CD8-positive, alpha-beta T cell (primary cell): ENCODE measurements at regions of chr1 and their contacts with region 1.

Region 1: GRCh38 chr1:235011599-235012435 is 116.8 kb downstream of the TOMM20 start:
- DNase-seq: peak; percentile 81 to 100 (median 90)
- ATAC-seq: peak; percentile 91
- H3K4me3 ChIP-seq: peak overlapping the region; percentile 11 to 47
- H3K4me3 Mint-ChIP-seq: peak overlapping the region; percentile 73
- H3K27ac ChIP-seq: peak overlapping the region; percentile 64 to 87
- H3K27ac Mint-ChIP-seq: peak overlapping the region; percentile 94
- H3K4me1 ChIP-seq: peaks cover 30% of the 10 kb centered on the region
- H3K4me1 Mint-ChIP-seq: peaks cover 54% of the 10 kb centered on the region
- H3K27me3 ChIP-seq: no peaks in the 10 kb centered on the region
- H3K27me3 Mint-ChIP-seq: no peaks in the 10 kb centered on the region
- CTCF ChIP-seq: no peak

Region 2: DNA sequence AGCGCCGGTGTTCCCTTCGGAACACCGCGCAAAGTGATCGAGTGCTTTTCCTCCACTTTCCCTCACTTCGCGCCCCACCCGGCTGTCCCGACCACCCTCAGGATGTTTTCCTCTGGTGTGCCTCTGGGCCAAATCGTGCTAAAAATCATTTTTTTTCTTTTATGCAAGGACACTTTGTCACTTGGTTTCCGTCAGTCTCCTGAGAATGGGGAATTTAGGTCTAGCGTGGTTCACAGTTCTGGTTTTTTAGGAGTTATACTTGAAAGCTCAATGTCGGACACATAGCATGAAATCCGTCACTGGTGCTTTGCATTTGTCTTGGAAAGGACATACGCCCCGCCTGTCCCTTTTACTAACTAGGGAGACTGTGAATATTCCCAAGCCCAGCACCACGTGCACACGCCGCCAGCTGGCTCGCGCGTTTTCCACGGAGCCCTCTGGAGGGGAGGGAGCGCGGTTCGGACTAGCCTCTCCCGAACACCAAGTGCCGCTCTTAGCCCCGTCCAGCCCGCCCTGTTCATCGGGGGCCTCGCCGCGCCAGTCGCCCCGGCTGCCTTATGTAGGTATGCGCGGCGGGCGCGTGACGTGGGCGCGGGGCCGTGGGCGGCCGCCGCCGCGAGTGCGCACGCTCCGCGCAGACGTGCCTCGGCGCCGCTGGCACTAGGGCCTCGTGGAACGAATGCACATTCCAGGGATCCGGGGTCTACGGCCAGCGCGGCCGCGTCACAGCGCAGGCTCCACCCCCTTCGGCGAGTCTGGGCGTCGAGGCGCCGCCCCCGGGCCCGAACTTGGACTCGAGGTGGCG is 401.3 kb before region 1 on chr1:
- CTCF ChIA-PET with region 1: no interaction called
- POLR2A ChIA-PET with region 1: interaction called, 5 read pairs
- intact Hi-C with region 1: loop called (anchors 1 to 2 kb)
- DNase-seq: peak; percentile 78 to 98 (median 89)
- ATAC-seq: peak; percentile 42
- H3K4me3 ChIP-seq: peak overlapping the region; percentile 78 to 86
- H3K4me3 Mint-ChIP-seq: peak overlapping the region; percentile 92
- H3K27ac ChIP-seq: peak overlapping the region; percentile 97 to 99
- H3K27ac Mint-ChIP-seq: peak overlapping the region; percentile 98
- H3K4me1 ChIP-seq: peaks cover 46% of the 10 kb centered on the region
- H3K4me1 Mint-ChIP-seq: peaks cover 49% of the 10 kb centered on the region
- H3K27me3 ChIP-seq: no peaks in the 10 kb centered on the region
- H3K27me3 Mint-ChIP-seq: no peaks in the 10 kb centered on the region
- CTCF ChIP-seq: no peak

Region 3: DNA sequence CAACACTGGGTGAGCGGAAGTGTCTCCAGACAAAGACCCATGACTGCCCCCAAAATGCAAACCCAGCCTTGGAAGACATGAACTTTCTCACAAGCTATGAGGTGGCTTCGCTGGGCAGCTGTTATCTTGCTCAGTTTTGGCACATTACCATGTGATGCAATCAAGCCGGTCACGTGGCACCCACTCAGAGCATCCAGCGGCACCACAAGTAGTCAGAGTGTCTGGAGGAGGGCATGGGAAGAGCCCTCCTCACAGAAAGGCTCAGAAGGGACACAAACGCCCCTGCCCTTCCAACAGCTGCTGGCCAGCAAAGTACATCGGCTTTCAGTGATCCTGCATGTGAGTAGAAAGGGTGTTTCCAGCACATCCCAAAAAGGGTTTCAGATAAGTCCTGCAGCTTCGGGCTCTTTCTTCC is 256.4 kb before region 1 on chr1:
- CTCF ChIA-PET with region 1: no interaction called
- POLR2A ChIA-PET with region 1: no interaction called
- intact Hi-C with region 1: loop called (anchors 1 to 5 kb)
- DNase-seq: no peak
- ATAC-seq: no peak
- H3K4me3 ChIP-seq: no peak overlapping the region
- H3K4me3 Mint-ChIP-seq: no peak overlapping the region
- H3K27ac ChIP-seq: no peak overlapping the region
- H3K27ac Mint-ChIP-seq: no peak overlapping the region
- H3K4me1 ChIP-seq: peaks cover 37% of the 10 kb centered on the region
- H3K4me1 Mint-ChIP-seq: peaks cover 41% of the 10 kb centered on the region
- H3K27me3 ChIP-seq: no peaks in the 10 kb centered on the region
- H3K27me3 Mint-ChIP-seq: no peaks in the 10 kb centered on the region
- CTCF ChIP-seq: no peak

Region 4: DNA sequence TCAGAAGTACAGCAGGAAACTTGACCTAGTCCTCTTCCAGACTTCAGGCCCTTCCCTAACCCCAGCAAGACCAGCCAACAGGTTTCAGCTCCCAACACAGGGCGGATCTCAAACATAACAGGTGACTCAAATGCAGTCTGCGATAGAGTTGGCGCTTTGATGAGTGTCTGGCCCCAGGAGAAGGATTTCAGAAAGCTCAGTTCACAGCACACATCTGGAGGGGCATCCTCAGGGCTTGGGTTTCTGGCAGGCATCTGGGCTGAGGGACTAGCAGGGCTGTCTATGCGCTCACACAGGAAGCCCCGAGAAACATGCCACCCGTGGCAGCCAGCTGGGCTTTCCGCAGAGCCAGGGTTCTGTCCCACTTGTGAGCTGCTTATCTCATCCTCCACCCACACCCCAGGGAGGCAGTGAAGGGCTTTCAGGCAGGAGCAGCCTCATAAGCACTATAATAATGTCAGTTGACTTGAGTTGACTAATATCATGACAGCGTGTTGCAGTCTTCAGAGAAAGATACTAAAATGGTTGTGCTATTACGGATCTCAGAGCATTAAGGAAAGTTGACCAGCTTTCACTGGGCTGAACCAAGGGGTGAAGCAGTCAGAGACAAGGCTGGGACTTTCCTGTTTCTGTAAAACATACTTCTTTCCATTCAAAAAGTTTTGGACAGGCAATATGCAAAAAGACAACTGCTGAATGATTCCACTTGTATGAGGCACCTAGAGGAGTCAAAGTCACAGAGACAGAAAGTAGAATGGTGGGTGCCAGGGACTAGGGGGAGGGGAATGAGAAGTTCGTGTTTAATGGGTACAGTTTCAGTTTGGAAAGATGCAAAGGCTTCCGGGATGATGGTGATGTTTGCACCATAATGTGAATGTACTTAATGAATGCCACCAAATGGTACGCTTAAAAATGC is 168.8 kb before region 1 on chr1:
- CTCF ChIA-PET with region 1: no interaction called
- POLR2A ChIA-PET with region 1: no interaction called
- intact Hi-C with region 1: loop called in 1 of 2 experiments (anchors 2 kb)
- DNase-seq: peak; percentile 10 to 76 (median 51)
- ATAC-seq: peak; percentile 48
- H3K4me3 ChIP-seq: no peak overlapping the region
- H3K4me3 Mint-ChIP-seq: peak overlapping the region; percentile 49
- H3K27ac ChIP-seq: no peak overlapping the region
- H3K27ac Mint-ChIP-seq: peak overlapping the region; percentile 75
- H3K4me1 ChIP-seq: peaks cover 53% of the 10 kb centered on the region
- H3K4me1 Mint-ChIP-seq: peaks cover 57% of the 10 kb centered on the region
- H3K27me3 ChIP-seq: no peaks in the 10 kb centered on the region
- H3K27me3 Mint-ChIP-seq: no peaks in the 10 kb centered on the region
- CTCF ChIP-seq: no peak

Region 5: GRCh38 chr1:234963180-234963903 is 48.5 kb before region 1 on chr1:
- CTCF ChIA-PET with region 1: no interaction called
- POLR2A ChIA-PET with region 1: no interaction called
- intact Hi-C with region 1: loop called (anchors 1 kb)
- DNase-seq: peak; percentile 58 to 97 (median 86)
- ATAC-seq: peak; percentile 85
- H3K4me3 ChIP-seq: peak overlapping the region in 1 of 2 experiments; percentile 16
- H3K4me3 Mint-ChIP-seq: peak overlapping the region; percentile 64
- H3K27ac ChIP-seq: peak overlapping the region; percentile 31 to 81
- H3K27ac Mint-ChIP-seq: peak overlapping the region; percentile 90
- H3K4me1 ChIP-seq: peaks cover 58% of the 10 kb centered on the region
- H3K4me1 Mint-ChIP-seq: peaks cover 62% of the 10 kb centered on the region
- H3K27me3 ChIP-seq: no peaks in the 10 kb centered on the region
- H3K27me3 Mint-ChIP-seq: no peaks in the 10 kb centered on the region
- CTCF ChIP-seq: no peak

Region 6: DNA sequence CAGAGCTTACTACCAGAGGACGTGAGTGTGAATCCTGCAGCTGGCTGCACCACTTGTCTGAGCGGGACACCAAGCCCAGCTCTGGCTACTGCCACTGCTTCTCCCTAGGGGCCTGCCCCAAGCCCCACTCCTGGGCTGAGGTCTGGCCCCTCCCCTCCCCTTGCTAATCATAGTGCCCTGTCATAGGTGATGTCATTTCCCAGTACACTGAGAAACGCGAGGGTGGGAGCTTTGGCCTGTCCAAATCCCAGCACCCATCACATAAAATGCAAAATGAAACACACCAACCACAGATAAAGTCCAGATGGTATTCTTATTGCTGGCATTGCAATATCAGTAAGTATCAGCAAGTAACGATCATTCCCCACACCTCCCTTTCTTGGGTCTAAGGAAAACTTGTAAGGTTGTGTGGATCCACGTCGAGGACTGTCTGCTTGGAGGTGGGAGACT is 39.1 kb after region 1 on chr1:
- CTCF ChIA-PET with region 1: no interaction called
- POLR2A ChIA-PET with region 1: no interaction called
- intact Hi-C with region 1: no loop called
- DNase-seq: no peak
- ATAC-seq: no peak
- H3K4me3 ChIP-seq: no peak overlapping the region
- H3K4me3 Mint-ChIP-seq: no peak overlapping the region
- H3K27ac ChIP-seq: no peak overlapping the region
- H3K27ac Mint-ChIP-seq: no peak overlapping the region
- H3K4me1 ChIP-seq: no peaks in the 10 kb centered on the region
- H3K4me1 Mint-ChIP-seq: no peaks in the 10 kb centered on the region
- H3K27me3 ChIP-seq: no peaks in the 10 kb centered on the region
- H3K27me3 Mint-ChIP-seq: no peaks in the 10 kb centered on the region
- CTCF ChIP-seq: no peak

Region 7: GRCh38 chr1:235075188-235075926 is 63.5 kb after region 1 on chr1:
- CTCF ChIA-PET with region 1: no interaction called
- POLR2A ChIA-PET with region 1: no interaction called
- intact Hi-C with region 1: loop called in 1 of 2 experiments (anchors 5 kb)
- DNase-seq: peak in 8 of 9 experiments; percentile 22 to 61 (median 48)
- ATAC-seq: peak; percentile 60
- H3K4me3 ChIP-seq: peak overlapping the region in 1 of 2 experiments; percentile 22
- H3K4me3 Mint-ChIP-seq: peak overlapping the region; percentile 63
- H3K27ac ChIP-seq: no peak overlapping the region
- H3K27ac Mint-ChIP-seq: peak overlapping the region; percentile 57
- H3K4me1 ChIP-seq: no peaks in the 10 kb centered on the region
- H3K4me1 Mint-ChIP-seq: peaks cover 15% of the 10 kb centered on the region
- H3K27me3 ChIP-seq: peaks cover 0 to 4% of the 10 kb centered on the region in 2 experiments
- H3K27me3 Mint-ChIP-seq: no peaks in the 10 kb centered on the region
- CTCF ChIP-seq: no peak

Region 8: DNA sequence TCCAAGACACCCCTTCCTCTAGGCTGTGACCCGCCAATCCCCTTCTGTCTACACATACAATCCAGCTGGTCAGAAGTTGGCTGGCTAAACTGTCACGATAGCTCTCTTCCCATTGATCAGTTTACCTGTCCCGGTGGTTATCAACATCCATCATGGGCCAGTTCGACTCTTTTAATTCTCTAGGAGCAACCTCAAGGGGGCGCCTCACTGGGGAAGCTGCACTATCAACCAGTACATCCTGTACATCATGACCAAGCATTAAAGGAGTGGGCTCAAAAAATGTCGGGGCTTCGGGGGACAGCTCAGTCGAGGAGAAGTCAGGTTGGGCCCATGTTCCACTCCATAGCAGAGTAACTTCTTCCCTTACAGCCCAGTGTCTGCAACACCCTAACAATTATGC is 545.7 kb after region 1 on chr1:
- CTCF ChIA-PET with region 1: no interaction called
- POLR2A ChIA-PET with region 1: no interaction called
- intact Hi-C with region 1: no loop called
- DNase-seq: peak in 1 of 9 experiments; percentile 6
- ATAC-seq: no peak
- H3K4me3 ChIP-seq: no peak overlapping the region
- H3K4me3 Mint-ChIP-seq: no peak overlapping the region
- H3K27ac ChIP-seq: no peak overlapping the region
- H3K27ac Mint-ChIP-seq: no peak overlapping the region
- H3K4me1 ChIP-seq: no peaks in the 10 kb centered on the region
- H3K4me1 Mint-ChIP-seq: no peaks in the 10 kb centered on the region
- H3K27me3 ChIP-seq: no peaks in the 10 kb centered on the region
- H3K27me3 Mint-ChIP-seq: no peaks in the 10 kb centered on the region
- CTCF ChIP-seq: no peak